ENCODE measurements at regions of chr3 and their contacts with region 1.

Region 1: GRCh38 chr3:189927975-189928895 is 192.5 kb downstream of the P3H2 start:
- DNase-seq: no peak
- H3K4me3 Mint-ChIP-seq: no peak overlapping the region
- H3K27ac Mint-ChIP-seq: peak overlapping the region; percentile 65
- H3K4me1 Mint-ChIP-seq: peaks cover 14% of the 10 kb centered on the region
- H3K27me3 Mint-ChIP-seq: no peaks in the 10 kb centered on the region

Region 2: GRCh38 chr3:189233225-189233858 is 694.9 kb before region 1 on chr3:
- intact Hi-C with region 1: loop called (anchors 2 kb)
- DNase-seq: no peak
- H3K4me3 Mint-ChIP-seq: no peak overlapping the region
- H3K27ac Mint-ChIP-seq: no peak overlapping the region
- H3K4me1 Mint-ChIP-seq: peaks cover 48% of the 10 kb centered on the region
- H3K27me3 Mint-ChIP-seq: peaks cover 18% of the 10 kb centered on the region

Region 3: GRCh38 chr3:189841473-189842210 is 86.6 kb before region 1 on chr3:
- intact Hi-C with region 1: loop called (anchors 10 kb)
- DNase-seq: no peak
- H3K4me3 Mint-ChIP-seq: no peak overlapping the region
- H3K27ac Mint-ChIP-seq: no peak overlapping the region
- H3K4me1 Mint-ChIP-seq: peaks cover 24% of the 10 kb centered on the region
- H3K27me3 Mint-ChIP-seq: peaks cover 2% of the 10 kb centered on the region

Region 4: GRCh38 chr3:190108804-190109203 is 180.6 kb after region 1 on chr3:
- intact Hi-C with region 1: no loop called
- DNase-seq: no peak
- H3K4me3 Mint-ChIP-seq: no peak overlapping the region
- H3K27ac Mint-ChIP-seq: no peak overlapping the region
- H3K4me1 Mint-ChIP-seq: no peaks in the 10 kb centered on the region
- H3K27me3 Mint-ChIP-seq: peaks cover 39% of the 10 kb centered on the region